ENCODE measurements at regions of chr5 and their contacts with region 1.

Region 1: GRCh38 chr5:36264202-36264760 is 22.6 kb upstream of the NADK2 start:
- DNase-seq: no peak
- H3K27ac ChIP-seq: no peak overlapping the region
- CTCF ChIP-seq: no peak

Region 2: GRCh38 chr5:36135994-36136393 is 128.3 kb before region 1 on chr5:
- CTCF ChIA-PET with region 1: no interaction called
- POLR2A ChIA-PET with region 1: no interaction called
- DNase-seq: no peak
- H3K27ac ChIP-seq: no peak overlapping the region
- CTCF ChIP-seq: no peak

Region 3: GRCh38 chr5:36285837-36286615 is 21.7 kb after region 1 on chr5:
- CTCF ChIA-PET with region 1: no interaction called
- POLR2A ChIA-PET with region 1: no interaction called
- DNase-seq: no peak
- H3K27ac ChIP-seq: no peak overlapping the region
- CTCF ChIP-seq: no peak

Region 4: DNA sequence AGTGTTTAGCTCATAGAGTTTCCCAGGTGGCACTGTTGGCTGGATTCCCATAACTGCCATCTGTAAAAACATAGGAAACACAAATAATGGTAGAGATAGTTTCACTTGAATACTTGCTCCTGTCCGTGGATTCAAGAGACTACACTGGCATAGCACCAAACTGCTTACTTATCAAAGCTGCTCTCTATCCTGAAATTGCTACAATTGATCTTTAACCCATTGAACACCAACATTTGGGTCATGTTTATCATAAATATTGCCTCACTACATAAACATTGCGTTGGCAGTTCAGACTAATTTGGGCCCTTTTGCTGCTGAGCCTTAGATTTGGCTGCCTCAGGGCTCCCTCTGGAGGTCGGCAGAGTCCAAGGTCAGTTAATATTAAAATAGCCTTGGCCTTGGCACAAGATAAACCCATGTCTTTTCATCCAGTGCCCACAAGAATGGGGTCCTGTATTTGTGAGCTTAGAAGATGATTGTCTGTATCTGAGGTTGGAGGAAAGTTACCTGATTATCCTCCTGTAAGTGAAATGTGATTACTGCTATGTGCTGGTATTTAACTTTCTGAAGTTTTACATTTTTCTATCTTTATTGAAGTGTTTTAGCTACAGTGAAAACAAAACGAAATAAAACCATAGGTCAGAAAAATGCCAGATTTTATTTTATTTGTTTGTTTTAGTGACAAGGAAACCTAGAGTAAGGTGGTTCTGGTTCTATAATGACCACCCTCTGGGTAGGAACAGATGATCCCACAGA is 41.5 kb after region 1 on chr5:
- CTCF ChIA-PET with region 1: interaction called, 10 read pairs
- POLR2A ChIA-PET with region 1: no interaction called
- DNase-seq: peak; percentile 37
- H3K27ac ChIP-seq: no peak overlapping the region
- CTCF ChIP-seq: peak; percentile 82